Right ventricle myocardium inferior (tissue), 1 donor: ENCODE measurements at regions of chr22 and their contacts with region 1.

Region 1: DNA sequence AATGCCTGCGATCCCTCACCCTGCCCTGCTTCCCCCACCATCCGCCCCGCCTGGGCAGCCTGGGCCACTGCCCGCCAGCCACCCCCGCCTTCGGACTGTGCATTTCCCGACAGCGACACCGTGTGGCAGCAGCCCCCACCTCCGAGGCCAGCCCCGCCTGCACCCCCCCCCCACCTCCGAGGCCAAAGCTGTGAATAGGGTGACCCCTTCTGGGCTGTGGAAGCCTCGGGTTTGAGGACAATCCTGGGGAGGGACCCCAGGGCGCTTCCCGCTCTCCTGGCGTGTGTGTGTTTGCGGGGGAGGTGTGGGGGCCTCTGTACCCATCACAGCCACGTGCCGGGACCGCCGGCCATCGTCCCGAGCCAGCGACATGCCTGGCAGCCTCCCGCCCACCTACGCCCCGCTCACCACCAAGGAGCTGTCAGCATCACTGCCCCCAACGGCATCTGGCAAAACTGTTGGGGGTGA is 33.8 kb upstream of the PPARA start:
- DNase-seq: peak; percentile 96
- ATAC-seq: peak; percentile 80

Region 2: GRCh38 chr22:45994491-45995404 is 121.8 kb before region 1 on chr22:
- intact Hi-C with region 1: loop called (anchors 1 kb)
- DNase-seq: peak; percentile 93
- ATAC-seq: peak; percentile 52

Region 3: GRCh38 chr22:46006379-46007002 is 110.0 kb before region 1 on chr22:
- intact Hi-C with region 1: loop called (anchors 1 kb)
- DNase-seq: peak; percentile 96
- ATAC-seq: peak; percentile 70

Region 4: GRCh38 chr22:46023558-46023981 is 93.0 kb before region 1 on chr22:
- intact Hi-C with region 1: no loop called
- DNase-seq: no peak
- ATAC-seq: no peak

Region 5: DNA sequence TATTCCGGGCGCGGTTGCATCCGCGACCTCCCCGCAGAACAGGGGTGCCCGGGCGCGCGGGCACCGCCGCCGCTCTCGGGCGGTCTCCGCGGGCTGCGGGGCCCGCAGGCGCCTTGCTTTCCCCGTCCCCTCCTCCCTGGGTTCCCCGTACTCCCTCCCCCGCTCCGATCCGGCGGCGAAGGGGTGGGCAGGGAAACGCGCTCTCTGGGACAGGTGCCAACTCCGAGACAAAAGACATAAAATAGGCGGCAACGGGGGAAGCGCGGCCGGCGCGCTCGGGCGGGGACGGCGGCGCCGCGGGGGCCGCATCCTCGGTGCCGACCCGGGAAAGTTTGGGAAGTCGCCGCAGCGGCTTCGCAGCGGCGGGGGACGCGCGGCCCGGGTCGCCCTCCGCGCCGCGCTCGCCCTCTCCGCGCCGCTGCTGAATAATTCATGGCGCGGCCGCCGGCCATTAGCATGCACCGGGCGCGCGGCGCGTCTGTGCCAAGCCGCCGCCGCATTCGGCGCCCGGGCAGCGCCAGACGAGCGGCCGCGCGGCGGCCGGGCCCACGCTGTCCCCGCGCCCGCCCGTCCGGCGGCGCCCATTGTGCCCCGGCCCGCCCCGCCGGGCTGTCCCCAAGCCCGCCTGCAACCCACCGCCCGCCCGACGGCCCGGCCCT is 44.9 kb before region 1 on chr22:
- intact Hi-C with region 1: loop called (anchors 2 kb)
- DNase-seq: peak; percentile 96
- ATAC-seq: peak; percentile 43